ENCODE measurements at regions of chr13 and their contacts with region 1.

Region 1: GRCh38 chr13:27171827-27172494 is 350 bp upstream of the USP12 start:
- DNase-seq: peak; percentile 97
- H3K4me3 Mint-ChIP-seq: peak overlapping the region; percentile 82
- H3K27ac Mint-ChIP-seq: peak overlapping the region; percentile 83
- H3K4me1 Mint-ChIP-seq: peaks cover 45% of the 10 kb centered on the region
- H3K27me3 Mint-ChIP-seq: no peaks in the 10 kb centered on the region

Region 2: GRCh38 chr13:25886438-25887214 is 1285.3 kb before region 1 on chr13:
- intact Hi-C with region 1: no loop called
- DNase-seq: no peak
- H3K4me3 Mint-ChIP-seq: no peak overlapping the region
- H3K27ac Mint-ChIP-seq: peak overlapping the region; percentile 35
- H3K4me1 Mint-ChIP-seq: peaks cover 41% of the 10 kb centered on the region
- H3K27me3 Mint-ChIP-seq: no peaks in the 10 kb centered on the region

Region 3: GRCh38 chr13:27147530-27148170 is 24.3 kb before region 1 on chr13:
- intact Hi-C with region 1: loop called (anchors 1 kb)
- DNase-seq: no peak
- H3K4me3 Mint-ChIP-seq: peak overlapping the region; percentile 60
- H3K27ac Mint-ChIP-seq: peak overlapping the region; percentile 94
- H3K4me1 Mint-ChIP-seq: peaks cover 48% of the 10 kb centered on the region
- H3K27me3 Mint-ChIP-seq: no peaks in the 10 kb centered on the region

Region 4: DNA sequence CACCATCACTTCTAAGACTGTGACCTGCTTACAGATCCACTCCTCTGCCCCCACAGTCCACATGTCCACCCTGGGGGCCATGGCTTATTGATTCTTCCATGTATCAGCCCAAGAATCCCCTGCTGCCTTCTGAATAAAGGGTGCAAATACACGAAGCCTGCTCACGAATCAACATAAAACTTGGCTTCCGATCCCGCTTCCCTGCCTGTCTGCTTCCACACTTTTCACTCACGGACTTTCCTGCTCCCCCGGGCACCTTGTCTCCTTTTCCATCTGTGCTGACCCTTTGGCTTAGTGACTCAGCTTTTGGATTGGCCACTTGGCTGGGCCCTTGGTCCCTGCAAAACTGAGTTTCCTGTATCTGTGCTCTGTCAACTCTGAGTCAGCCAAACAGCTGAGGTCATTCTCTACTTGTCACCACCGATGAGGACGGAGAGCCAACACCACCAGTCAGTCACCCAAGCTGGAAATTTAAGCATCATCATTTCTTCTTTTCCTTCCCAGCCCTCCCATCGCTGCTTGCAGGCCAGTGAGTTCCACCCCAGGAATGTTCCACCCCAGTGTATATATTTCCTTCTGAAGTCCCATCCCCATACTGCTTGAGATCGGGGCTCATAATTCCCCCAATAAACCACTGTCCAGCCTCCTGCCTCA is 11.0 kb after region 1 on chr13:
- intact Hi-C with region 1: no loop called
- DNase-seq: no peak
- H3K4me3 Mint-ChIP-seq: no peak overlapping the region
- H3K27ac Mint-ChIP-seq: no peak overlapping the region
- H3K4me1 Mint-ChIP-seq: no peaks in the 10 kb centered on the region
- H3K27me3 Mint-ChIP-seq: peaks cover 4% of the 10 kb centered on the region

Region 5: GRCh38 chr13:27251166-27252091 is 79.5 kb after region 1 on chr13 and contains the start of gene RPL21:
- intact Hi-C with region 1: loop called (anchors 1 kb)
- DNase-seq: peak; percentile 97
- H3K4me3 Mint-ChIP-seq: peak within 1 kb of the TSS; percentile 100
- H3K27ac Mint-ChIP-seq: peak within 1 kb of the TSS; percentile 99
- H3K4me1 Mint-ChIP-seq: peaks cover 30% of the 10 kb centered on the region
- H3K27me3 Mint-ChIP-seq: no peaks in the 10 kb centered on the region
- total RNA-seq, gene RPL21: 1,100 and 1,185 TPM in 2 replicates

Region 6: GRCh38 chr13:27353166-27353583 is 181.2 kb after region 1 on chr13:
- intact Hi-C with region 1: loop called (anchors 2 kb)
- DNase-seq: peak; percentile 75
- H3K4me3 Mint-ChIP-seq: no peak overlapping the region
- H3K27ac Mint-ChIP-seq: no peak overlapping the region
- H3K4me1 Mint-ChIP-seq: peaks cover 7% of the 10 kb centered on the region
- H3K27me3 Mint-ChIP-seq: peaks cover 6% of the 10 kb centered on the region

Region 7: GRCh38 chr13:27449936-27450828 is 278.2 kb after region 1 on chr13 and contains the start of gene MTIF3:
- intact Hi-C with region 1: loop called (anchors 10 kb)
- DNase-seq: peak; percentile 99
- H3K4me3 Mint-ChIP-seq: peak within 1 kb of the TSS; percentile 88
- H3K27ac Mint-ChIP-seq: peak within 1 kb of the TSS; percentile 96
- H3K4me1 Mint-ChIP-seq: peaks cover 43% of the 10 kb centered on the region
- H3K27me3 Mint-ChIP-seq: no peaks in the 10 kb centered on the region
- total RNA-seq, gene MTIF3: 28.8 and 30.4 TPM in 2 replicates

Measured in activated CD4-positive, alpha-beta T cell treated with anti-CD3 and anti-CD28 coated beads, Interleukin-2, amount 10 ng/mL, durations not matched to agents 24 days and 14 days (primary cell).